SK-N-SH (cell line): ENCODE measurements at regions of chr2 and their contacts with region 1.

Region 1: DNA sequence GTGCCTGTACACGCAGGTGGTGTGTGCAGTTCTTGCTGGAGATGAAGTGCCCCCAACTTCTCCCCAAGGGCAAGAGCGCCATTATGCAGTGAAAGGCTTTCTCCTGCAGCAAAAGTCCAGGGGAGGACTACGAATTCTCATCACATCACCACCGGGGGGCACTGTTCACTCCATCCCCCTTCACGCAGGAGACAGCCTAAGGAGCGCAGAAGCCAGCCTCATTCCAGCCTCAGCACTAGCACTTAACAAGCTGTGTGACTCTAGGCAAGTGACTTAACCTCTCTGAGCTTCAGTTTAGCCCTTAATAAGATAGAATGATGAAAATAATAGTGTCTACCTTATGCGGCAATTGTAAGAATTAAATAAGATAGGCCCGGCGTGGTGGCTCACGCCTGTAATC is 32.3 kb downstream of the DNMT3A start:
- DNase-seq: peak; percentile 85
- H3K4me3 ChIP-seq: no peak overlapping the region; a peak in 1 of 4 replicates
- H3K27ac ChIP-seq: peak overlapping the region in 1 of 2 experiments; percentile 53; a peak in 1 of 4 replicates
- H3K4me1 ChIP-seq: peaks cover 13 to 99% of the 10 kb centered on the region in 2 experiments; a peak in 3 of 4 replicates
- H3K27me3 ChIP-seq: no peaks in the 10 kb centered on the region
- CTCF ChIP-seq: peak; percentile 66
- EP300 ChIP-seq: no peak
- RAD21 ChIP-seq: peak; percentile 74

Region 2: GRCh38 chr2:25063876-25064660 is 245.3 kb before region 1 on chr2:
- CTCF ChIA-PET with region 1: no interaction called
- POLR2A ChIA-PET with region 1: no interaction called
- DNase-seq: no peak
- H3K4me3 ChIP-seq: no peak overlapping the region
- H3K27ac ChIP-seq: no peak overlapping the region
- H3K4me1 ChIP-seq: peaks cover 3 to 18% of the 10 kb centered on the region in 2 experiments; a peak in 2 of 4 replicates
- H3K27me3 ChIP-seq: no peaks in the 10 kb centered on the region
- CTCF ChIP-seq: no peak
- EP300 ChIP-seq: no peak
- RAD21 ChIP-seq: no peak

Region 3: DNA sequence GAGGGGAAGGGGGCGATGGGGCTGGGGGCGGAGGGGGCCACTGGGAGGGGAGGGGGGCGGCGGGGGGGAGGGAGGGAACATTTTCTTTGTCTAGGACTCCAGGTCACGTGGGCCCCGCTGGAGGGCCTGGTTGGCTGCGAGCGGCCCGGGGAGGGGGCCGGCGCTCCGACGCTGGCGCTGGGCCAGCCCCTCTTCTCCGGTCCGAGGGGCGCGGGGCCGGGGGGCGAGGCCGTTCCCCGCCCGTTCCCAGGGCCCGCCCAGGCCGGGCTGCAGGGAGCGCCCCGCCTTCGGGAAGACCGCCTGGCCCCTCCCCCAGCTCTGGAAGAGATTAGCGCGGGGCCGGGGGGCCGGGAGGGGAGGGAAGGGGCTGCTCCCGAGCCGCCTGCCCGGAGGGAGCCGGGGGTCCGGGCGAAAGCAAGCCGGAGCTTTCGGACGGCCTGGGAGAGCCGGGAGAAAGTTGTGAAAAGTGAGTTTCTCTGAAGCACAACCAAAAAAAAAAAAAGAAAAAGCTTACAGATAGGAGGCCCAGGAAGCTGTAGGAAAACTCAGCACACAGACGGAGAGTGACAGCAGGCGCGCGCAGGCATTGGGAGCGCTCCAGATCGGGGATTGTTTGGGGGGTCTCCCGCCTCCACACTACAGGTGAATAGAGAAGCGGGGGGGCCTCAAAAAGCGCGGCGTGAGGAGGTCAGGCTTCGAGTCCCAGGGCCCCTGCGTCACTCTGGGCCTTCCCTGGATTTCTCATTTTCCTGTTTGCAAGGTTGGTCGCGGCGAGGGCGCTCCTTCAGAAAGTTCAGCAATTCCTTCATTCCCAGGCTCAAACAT is 56.9 kb before region 1 on chr2:
- CTCF ChIA-PET with region 1: interaction called, 7 read pairs
- POLR2A ChIA-PET with region 1: interaction called, 10 read pairs
- DNase-seq: peak; percentile 99
- H3K4me3 ChIP-seq: peak overlapping the region in 1 of 2 experiments; percentile 52; a peak in 2 of 4 replicates
- H3K27ac ChIP-seq: peak overlapping the region in 1 of 2 experiments; percentile 96; a peak in 2 of 4 replicates
- H3K4me1 ChIP-seq: peaks cover 17 to 66% of the 10 kb centered on the region in 2 experiments
- H3K27me3 ChIP-seq: no peaks in the 10 kb centered on the region
- CTCF ChIP-seq: no peak
- EP300 ChIP-seq: peak in 1 of 2 experiments; percentile 37; a peak in 1 of 4 replicates
- RAD21 ChIP-seq: no peak; the same call in 1 of the 2 replicates

Region 4: GRCh38 chr2:25286025-25286400 is 23.4 kb before region 1 on chr2:
- CTCF ChIA-PET with region 1: interaction called, 15 read pairs
- POLR2A ChIA-PET with region 1: interaction called, 6 read pairs
- DNase-seq: peak; percentile 79
- H3K4me3 ChIP-seq: no peak overlapping the region
- H3K27ac ChIP-seq: peak overlapping the region in 1 of 2 experiments; percentile 50; a peak in 1 of 4 replicates
- H3K4me1 ChIP-seq: peaks cover 13 to 43% of the 10 kb centered on the region in 2 experiments; a peak in 2 of 4 replicates
- H3K27me3 ChIP-seq: no peaks in the 10 kb centered on the region
- CTCF ChIP-seq: no peak
- EP300 ChIP-seq: no peak
- RAD21 ChIP-seq: no peak

Region 5: DNA sequence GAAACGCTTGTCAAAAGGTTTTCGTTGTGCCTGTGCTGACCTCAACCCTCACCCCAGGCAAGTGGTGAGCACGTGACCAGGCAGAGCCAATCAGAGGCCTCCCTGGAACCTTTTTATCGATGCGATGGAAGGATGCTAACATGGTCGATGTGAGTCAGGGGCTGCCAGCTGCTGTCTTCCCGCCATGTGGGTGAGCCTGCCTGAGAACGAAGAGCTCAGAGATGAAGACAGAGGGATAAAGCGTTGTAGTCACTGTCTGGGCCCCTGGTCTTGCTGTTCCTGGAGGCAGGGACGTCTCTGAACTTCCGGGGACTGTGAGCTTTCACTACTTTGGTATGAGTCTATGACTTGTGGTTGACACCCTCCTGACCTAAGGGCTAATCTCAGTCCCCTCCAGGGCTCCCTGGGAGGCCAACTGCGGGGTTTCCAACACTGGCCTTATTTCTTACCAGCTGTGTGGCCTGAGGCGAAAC is 13.7 kb after region 1 on chr2:
- CTCF ChIA-PET with region 1: interaction called, 22 read pairs
- POLR2A ChIA-PET with region 1: interaction called, 10 read pairs
- DNase-seq: no peak
- H3K4me3 ChIP-seq: no peak overlapping the region
- H3K27ac ChIP-seq: no peak overlapping the region; a peak in 1 of 4 replicates
- H3K4me1 ChIP-seq: peaks cover 10 to 27% of the 10 kb centered on the region in 2 experiments; a peak in 2 of 4 replicates
- H3K27me3 ChIP-seq: no peaks in the 10 kb centered on the region
- CTCF ChIP-seq: no peak
- EP300 ChIP-seq: no peak
- RAD21 ChIP-seq: no peak

Region 6: GRCh38 chr2:25331686-25332365 is 22.4 kb after region 1 on chr2:
- CTCF ChIA-PET with region 1: interaction called, 117 read pairs
- POLR2A ChIA-PET with region 1: interaction called, 20 read pairs
- DNase-seq: no peak
- H3K4me3 ChIP-seq: no peak overlapping the region
- H3K27ac ChIP-seq: peak overlapping the region in 1 of 2 experiments; percentile 77; a peak in 1 of 4 replicates
- H3K4me1 ChIP-seq: peaks cover 0 to 67% of the 10 kb centered on the region in 2 experiments; a peak in 2 of 4 replicates
- H3K27me3 ChIP-seq: no peaks in the 10 kb centered on the region
- CTCF ChIP-seq: no peak
- EP300 ChIP-seq: no peak
- RAD21 ChIP-seq: no peak

Region 7: GRCh38 chr2:25337276-25337675 is 27.9 kb after region 1 on chr2:
- CTCF ChIA-PET with region 1: interaction called, 117 read pairs
- POLR2A ChIA-PET with region 1: interaction called, 20 read pairs
- DNase-seq: no peak
- H3K4me3 ChIP-seq: no peak overlapping the region
- H3K27ac ChIP-seq: peak overlapping the region in 1 of 2 experiments; percentile 89; a peak in 1 of 4 replicates
- H3K4me1 ChIP-seq: peaks cover 4 to 76% of the 10 kb centered on the region in 2 experiments; a peak in 2 of 4 replicates
- H3K27me3 ChIP-seq: no peaks in the 10 kb centered on the region
- CTCF ChIP-seq: no peak
- EP300 ChIP-seq: no peak
- RAD21 ChIP-seq: no peak